AG04449 (cell line): ENCODE measurements at regions of chr14 and their contacts with region 1.

Region 1: DNA sequence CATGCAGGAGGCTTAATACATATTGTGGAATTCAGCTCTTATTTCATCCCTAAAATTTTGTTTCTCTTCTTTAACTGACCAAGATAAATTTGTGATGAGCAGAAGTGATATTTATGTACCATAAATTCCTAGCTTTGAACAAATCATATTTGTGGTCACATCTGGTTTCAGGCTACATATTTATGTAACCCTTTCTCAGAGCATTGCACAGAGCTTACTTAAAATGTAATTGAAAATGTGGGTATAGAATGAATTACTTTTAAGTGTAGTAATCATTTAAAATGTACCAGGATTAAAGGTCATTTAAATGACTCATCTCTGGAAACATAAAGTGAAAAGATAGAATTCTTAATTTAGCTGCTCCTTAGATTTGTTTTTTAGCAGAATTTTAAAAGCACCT is 129.9 kb upstream of the FRMD6 start:
- DNase-seq: peak; percentile 88
- H3K4me3 ChIP-seq: no peak overlapping the region
- CTCF ChIP-seq: no peak

Region 2: GRCh38 chr14:50469982-50470381 is 1051.8 kb before region 1 on chr14:
- CTCF ChIA-PET with region 1: no interaction called
- POLR2A ChIA-PET with region 1: no interaction called
- DNase-seq: no peak
- H3K4me3 ChIP-seq: no peak overlapping the region
- CTCF ChIP-seq: no peak

Region 3: GRCh38 chr14:51442513-51443175 is 79.1 kb before region 1 on chr14:
- CTCF ChIA-PET with region 1: interaction called, 3 read pairs
- POLR2A ChIA-PET with region 1: interaction called, 10 read pairs
- DNase-seq: peak; percentile 94
- H3K4me3 ChIP-seq: no peak overlapping the region; the same call in 1 of the 2 replicates
- CTCF ChIP-seq: no peak

Region 4: DNA sequence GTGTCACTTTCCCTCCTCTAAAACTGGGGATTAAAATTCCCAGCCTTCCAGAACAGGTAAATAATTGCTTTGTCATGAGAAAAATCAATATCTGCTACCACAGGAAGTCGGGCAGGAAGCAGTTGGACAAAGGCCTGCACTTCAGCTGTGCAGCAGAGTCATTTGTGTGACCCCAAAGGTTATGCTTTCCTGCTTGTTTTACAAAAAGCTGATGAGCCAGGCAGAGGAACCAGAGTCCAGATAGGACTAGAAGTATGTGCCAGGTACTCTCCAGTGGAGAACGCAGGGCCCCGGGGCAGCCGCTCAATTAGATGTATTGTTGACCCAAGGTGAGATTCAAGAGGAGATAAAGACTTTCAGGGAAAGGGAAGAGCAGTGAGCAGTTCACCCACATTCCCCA is 12.9 kb after region 1 on chr14:
- CTCF ChIA-PET with region 1: interaction called, 4 read pairs
- POLR2A ChIA-PET with region 1: interaction called, 16 read pairs
- DNase-seq: no peak
- H3K4me3 ChIP-seq: no peak overlapping the region
- CTCF ChIP-seq: no peak